Posterior cingulate gyrus (tissue), 11 donors: ENCODE measurements at regions of chr4 and their contacts with region 1.

Region 1: GRCh38 chr4:151362404-151363164 is 37.2 kb upstream of the SH3D19 start:
- DNase-seq: peak; percentile 52 to 96 (median 80)

Region 2: GRCh38 chr4:151117371-151117962 is 245.1 kb before region 1 on chr4:
- intact Hi-C with region 1: loop called (anchors 1 kb)
- DNase-seq: peak in 6 of 10 donors; percentile 29 to 74 (median 50)

Region 3: GRCh38 chr4:151238477-151238876 is 124.1 kb before region 1 on chr4:
- intact Hi-C with region 1: loop called (anchors 2 kb)
- DNase-seq: no peak

Region 4: DNA sequence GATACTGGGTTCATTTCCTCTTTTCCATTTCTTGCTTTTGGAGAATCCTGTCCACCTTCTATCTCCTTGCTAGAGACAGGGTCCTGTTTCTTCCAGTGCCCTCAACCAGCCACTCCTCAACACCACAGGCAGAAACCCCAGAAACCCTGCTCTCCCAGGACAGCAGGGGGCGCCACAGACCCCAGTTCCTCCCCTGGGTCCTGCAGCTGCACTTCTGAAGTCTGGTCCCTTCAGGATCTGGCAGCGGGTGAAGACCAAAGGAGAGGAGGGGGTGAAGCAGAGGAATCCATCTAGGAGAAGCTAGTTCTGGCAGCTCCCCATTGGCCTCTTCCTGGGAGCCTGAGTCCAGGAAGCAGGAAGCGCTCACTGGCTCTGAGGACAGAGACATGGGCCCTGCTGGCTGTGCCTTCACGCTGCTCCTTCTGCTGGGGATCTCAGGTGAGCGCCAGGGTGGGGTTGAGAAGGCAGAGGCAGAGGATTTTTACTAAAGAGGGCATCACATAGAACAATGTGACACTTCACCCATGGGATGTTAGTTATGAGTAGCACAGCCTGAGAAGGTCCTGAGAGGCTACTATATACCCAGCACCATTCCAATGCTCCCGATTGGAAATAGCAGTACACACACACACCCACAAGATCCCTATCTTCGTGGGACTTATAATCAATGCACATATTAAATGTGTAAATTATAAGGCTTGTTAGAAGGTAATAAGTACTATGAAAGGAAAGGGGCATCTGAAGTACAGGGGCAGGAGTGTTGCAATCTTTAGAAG is 85.6 kb before region 1 on chr4 and contains the start of gene PRSS48:
- intact Hi-C with region 1: loop called (anchors 2 kb)
- DNase-seq: peak; percentile 69 to 97 (median 83)

Region 5: DNA sequence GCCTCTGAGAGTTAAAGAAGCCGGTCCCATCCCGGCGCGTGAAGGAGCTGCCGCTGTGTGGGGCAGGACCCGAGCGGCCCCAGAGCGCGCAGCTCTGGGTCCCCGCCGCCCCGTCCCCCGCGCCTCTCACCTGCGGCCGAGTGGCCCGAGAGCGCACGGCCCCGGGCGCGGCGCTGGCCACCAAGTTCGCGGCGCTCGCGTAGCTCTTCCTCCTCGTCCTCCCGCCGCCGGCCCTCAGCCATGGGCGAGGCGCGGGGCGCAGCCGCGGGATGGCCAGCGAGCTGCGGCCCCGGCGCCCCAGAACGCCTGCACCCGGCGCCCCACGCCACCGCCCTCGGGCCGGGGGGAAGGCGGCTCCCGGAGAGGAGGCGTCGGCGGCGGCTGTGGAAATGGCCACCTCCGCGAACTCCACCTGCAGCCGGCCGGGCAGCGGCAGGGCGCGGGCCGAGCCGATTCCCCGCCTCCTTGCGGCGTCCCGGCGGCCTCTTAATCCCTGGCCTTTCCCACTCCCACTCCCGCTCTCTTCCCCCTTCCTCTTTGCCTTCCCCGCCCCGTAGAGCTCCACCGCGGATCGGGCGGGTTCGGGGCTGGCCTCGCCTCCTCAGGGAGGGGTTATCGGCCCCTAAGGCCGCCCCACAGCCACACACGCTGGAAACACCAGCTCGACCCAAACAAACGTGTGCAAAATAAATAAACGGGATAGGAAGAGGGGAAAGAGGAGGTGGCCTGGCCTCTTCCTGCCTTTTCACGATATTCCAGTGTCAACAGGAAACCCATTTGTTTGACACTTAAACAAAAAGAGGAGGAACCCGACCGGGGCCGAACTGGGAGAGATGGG is 37.3 kb before region 1 on chr4 and contains the start of gene SH3D19:
- intact Hi-C with region 1: loop called (anchors 5 kb)
- DNase-seq: peak; percentile 21 to 92 (median 42)

Region 6: GRCh38 chr4:151604238-151604637 is 241.7 kb after region 1 on chr4:
- intact Hi-C with region 1: loop called (anchors 10 kb)
- DNase-seq: no peak